Dendritic cell treated with granulocyte-macrophage colony-stimulating factor and Interleukin-4, amounts not matched to agents 40 ng/mL and 50 ng/mL, for 4 days (primary cell): ENCODE measurements at regions of chr7 and their contacts with region 1.

Region 1: GRCh38 chr7:155769701-155770100 is 42.6 kb downstream of the SHH start:
- H3K4me3 Mint-ChIP-seq: peak overlapping the region; percentile 39
- H3K27ac Mint-ChIP-seq: peak overlapping the region; percentile 52
- H3K4me1 Mint-ChIP-seq: peaks cover 47% of the 10 kb centered on the region
- H3K27me3 Mint-ChIP-seq: no peaks in the 10 kb centered on the region

Region 2: DNA sequence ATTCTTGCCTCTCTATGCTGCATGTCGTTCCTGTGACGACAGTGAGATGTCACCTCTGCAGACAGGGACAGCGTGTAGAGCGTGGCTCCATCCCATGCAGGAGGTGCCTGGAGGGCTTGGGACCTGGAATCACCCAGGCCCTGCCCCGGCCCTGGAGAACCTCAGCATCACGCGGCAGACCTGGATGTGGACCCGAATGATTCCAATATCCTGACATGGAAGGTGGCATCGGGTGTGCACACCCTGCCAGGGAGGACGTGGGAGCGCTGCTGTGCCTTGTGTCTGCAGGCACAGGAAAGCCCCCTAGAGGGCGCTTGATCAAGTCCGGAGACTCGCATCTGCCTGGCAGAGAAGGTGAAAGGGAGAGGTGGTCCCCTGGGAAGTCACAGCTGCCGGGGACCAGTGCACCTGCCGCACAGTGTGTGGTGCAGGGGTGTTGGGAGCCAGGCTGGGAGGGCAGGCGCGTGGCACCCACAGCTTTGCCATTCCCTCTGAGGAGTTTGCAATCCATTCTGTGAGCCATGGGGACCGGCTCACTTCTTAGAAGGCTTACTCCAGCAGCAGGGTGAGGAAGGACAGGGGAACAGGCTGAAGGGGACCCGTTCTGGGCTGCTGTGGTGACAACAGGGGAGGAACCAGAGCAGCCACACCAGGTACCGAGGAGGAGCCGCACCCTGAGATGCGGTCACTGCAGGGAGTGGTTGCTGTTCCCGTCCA is 357.0 kb before region 1 on chr7:
- intact Hi-C with region 1: loop called (anchors 2 kb)
- H3K4me3 Mint-ChIP-seq: no peak overlapping the region
- H3K27ac Mint-ChIP-seq: no peak overlapping the region
- H3K4me1 Mint-ChIP-seq: peaks cover 5% of the 10 kb centered on the region
- H3K27me3 Mint-ChIP-seq: peaks cover 42% of the 10 kb centered on the region

Region 3: DNA sequence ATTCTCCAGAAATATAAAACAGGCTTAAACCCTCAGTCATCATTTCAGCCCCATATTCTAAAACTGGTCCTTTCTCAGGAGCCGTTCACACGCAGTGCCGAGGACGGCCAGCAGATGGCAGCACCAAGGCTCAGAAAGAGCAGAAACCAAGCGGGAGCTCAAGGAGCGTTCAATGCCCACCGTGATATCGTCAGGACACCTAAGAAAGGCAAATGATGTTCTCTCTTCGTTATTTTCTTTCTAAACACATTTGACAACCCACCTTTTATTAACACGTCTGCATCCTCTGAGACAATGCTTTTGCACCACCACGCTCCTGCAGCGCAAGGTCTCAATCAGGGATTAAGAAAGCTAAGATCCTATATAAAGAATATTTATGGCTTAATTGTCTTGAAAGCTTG is 170.9 kb before region 1 on chr7:
- intact Hi-C with region 1: loop called (anchors 2 kb)
- H3K4me3 Mint-ChIP-seq: peak overlapping the region; percentile 51
- H3K27ac Mint-ChIP-seq: no peak overlapping the region
- H3K4me1 Mint-ChIP-seq: peaks cover 62% of the 10 kb centered on the region
- H3K27me3 Mint-ChIP-seq: peaks cover 17% of the 10 kb centered on the region